AG04450 (cell line): ENCODE measurements at regions of chr4 and their contacts with region 1.

Region 1: GRCh38 chr4:163554870-163555465 is 60.5 kb downstream of the TMA16 start:
- DNase-seq: no peak
- H3K4me3 ChIP-seq: no peak overlapping the region
- H3K27ac ChIP-seq: no peak overlapping the region
- H3K27me3 ChIP-seq: no peaks in the 10 kb centered on the region
- CTCF ChIP-seq: peak; percentile 71

Region 2: GRCh38 chr4:163484906-163485305 is 70.1 kb before region 1 on chr4:
- CTCF ChIA-PET with region 1: interaction called, 218 read pairs
- POLR2A ChIA-PET with region 1: no interaction called
- DNase-seq: peak; percentile 11
- H3K4me3 ChIP-seq: no peak overlapping the region
- H3K27ac ChIP-seq: no peak overlapping the region
- H3K27me3 ChIP-seq: peaks cover 3% of the 10 kb centered on the region
- CTCF ChIP-seq: peak; percentile 63

Region 3: DNA sequence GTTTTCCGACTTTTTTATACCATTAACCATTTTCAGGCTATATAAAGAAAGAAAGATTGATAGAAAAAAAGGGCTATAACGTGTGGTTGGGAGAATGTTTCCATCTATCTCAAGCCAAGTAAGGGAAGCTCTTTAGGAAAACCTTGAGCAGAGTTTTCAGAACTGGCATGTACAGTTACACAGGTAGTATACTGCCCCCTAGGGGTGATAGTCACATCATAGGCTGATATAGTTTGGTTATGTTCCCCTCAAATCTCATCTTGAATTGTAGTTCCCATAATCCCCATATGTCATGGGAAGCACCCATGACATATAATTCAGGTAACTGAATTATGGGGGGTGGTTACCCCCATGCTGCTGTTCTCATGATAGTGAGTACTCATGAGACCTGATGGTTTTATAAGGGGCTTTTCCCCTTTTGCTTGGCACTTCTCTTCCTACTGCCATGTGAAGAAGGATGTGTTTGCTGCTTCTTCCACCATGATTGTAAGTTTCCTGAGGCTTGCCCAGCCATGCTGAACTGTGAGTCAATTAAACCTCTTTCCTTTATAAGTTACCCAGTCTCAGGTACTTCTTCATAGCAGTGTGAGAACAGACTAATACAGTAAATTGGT is 126.3 kb after region 1 on chr4:
- CTCF ChIA-PET with region 1: interaction called, 55 read pairs
- POLR2A ChIA-PET with region 1: interaction called, 7 read pairs
- DNase-seq: no peak
- H3K4me3 ChIP-seq: no peak overlapping the region
- H3K27ac ChIP-seq: no peak overlapping the region
- H3K27me3 ChIP-seq: no peaks in the 10 kb centered on the region
- CTCF ChIP-seq: peak; percentile 54

Region 4: GRCh38 chr4:163748449-163748848 is 193.5 kb after region 1 on chr4:
- CTCF ChIA-PET with region 1: interaction called, 361 read pairs
- POLR2A ChIA-PET with region 1: no interaction called
- DNase-seq: no peak
- H3K4me3 ChIP-seq: no peak overlapping the region
- H3K27ac ChIP-seq: no peak overlapping the region
- H3K27me3 ChIP-seq: no peaks in the 10 kb centered on the region
- CTCF ChIP-seq: no peak

Region 5: GRCh38 chr4:164731827-164732474 is 1177.0 kb after region 1 on chr4:
- CTCF ChIA-PET with region 1: interaction called, 72 read pairs
- POLR2A ChIA-PET with region 1: no interaction called
- DNase-seq: no peak
- H3K4me3 ChIP-seq: no peak overlapping the region
- H3K27ac ChIP-seq: no peak overlapping the region
- H3K27me3 ChIP-seq: no peaks in the 10 kb centered on the region
- CTCF ChIP-seq: peak; percentile 78

Region 6: DNA sequence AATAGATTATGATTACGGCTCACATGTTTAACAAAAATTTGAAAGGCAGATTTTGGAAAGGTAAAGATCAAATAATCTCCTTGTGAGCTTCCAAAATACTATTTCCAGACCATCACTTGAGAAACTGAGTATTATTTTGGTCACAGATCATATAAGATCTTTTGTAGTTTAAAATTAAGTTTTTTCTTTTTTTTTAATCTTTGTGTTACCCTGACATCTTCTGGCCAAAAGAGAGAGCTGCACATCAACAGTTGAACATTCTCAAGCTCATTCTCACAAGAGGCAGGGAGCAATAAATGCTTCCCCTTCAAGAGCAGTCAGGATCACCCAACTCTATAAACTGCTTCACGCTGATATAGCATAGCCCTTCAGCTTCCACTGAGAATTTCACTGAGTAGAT is 1541.8 kb after region 1 on chr4:
- CTCF ChIA-PET with region 1: interaction called, 36 read pairs
- POLR2A ChIA-PET with region 1: no interaction called
- DNase-seq: no peak
- H3K4me3 ChIP-seq: no peak overlapping the region
- H3K27ac ChIP-seq: no peak overlapping the region
- H3K27me3 ChIP-seq: no peaks in the 10 kb centered on the region
- CTCF ChIP-seq: peak; percentile 61